ENCODE measurements at regions of chr2 and their contacts with region 1.

Region 1: DNA sequence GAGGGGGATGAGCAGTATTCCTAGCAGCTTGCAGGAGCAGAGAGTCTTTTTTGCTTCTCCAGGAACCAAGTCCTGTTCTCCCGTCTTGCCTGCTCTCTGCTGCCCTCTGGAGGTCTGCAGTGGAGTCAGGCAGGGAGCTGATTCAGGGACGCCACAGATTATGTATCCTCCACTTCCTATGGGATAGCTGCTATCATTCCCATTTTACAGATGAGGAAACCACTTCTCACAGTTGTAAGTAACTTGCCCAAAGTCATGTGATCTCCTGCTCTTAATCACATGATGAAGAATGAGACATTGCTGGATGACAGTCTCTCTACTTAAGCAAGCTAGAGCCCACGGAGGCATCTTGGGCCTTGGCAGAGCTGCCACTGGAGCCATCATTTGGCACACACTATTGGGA is 8.3 kb downstream of the SLC4A5 start:
- DNase-seq: peak; percentile 70 to 82 (median 76)
- ATAC-seq: peak; percentile 59 to 86 (median 74)
- H3K4me3 ChIP-seq: no peak overlapping the region
- H3K27ac ChIP-seq: no peak overlapping the region
- H3K4me1 ChIP-seq: no peaks in the 10 kb centered on the region
- H3K27me3 ChIP-seq: no peaks in the 10 kb centered on the region
- CTCF ChIP-seq: peak; percentile 89 to 98 (median 95)
- POLR2A ChIP-seq: no peak

Region 2: GRCh38 chr2:74250189-74250631 is 84.7 kb before region 1 on chr2:
- intact Hi-C with region 1: loop called in 7 of 10 experiments (anchors 5 to 10 kb)
- DNase-seq: peak in 2 of 5 donors; percentile 31 to 50
- ATAC-seq: peak in 2 of 4 donors; percentile 38 to 51
- H3K4me3 ChIP-seq: no peak overlapping the region
- H3K27ac ChIP-seq: no peak overlapping the region
- H3K4me1 ChIP-seq: peaks cover 0 to 13% (median 2%) of the 10 kb centered on the region in 12 donors
- H3K27me3 ChIP-seq: no peaks in the 10 kb centered on the region
- CTCF ChIP-seq: peak; percentile 62 to 87 (median 74)
- POLR2A ChIP-seq: no peak

Region 3: GRCh38 chr2:74267068-74267467 is 67.9 kb before region 1 on chr2:
- intact Hi-C with region 1: loop called in 3 of 10 experiments (anchors 2 to 5 kb)
- DNase-seq: no peak
- ATAC-seq: peak in 2 of 4 donors; percentile 41 to 47
- H3K4me3 ChIP-seq: no peak overlapping the region
- H3K27ac ChIP-seq: no peak overlapping the region
- H3K4me1 ChIP-seq: peaks cover 0 to 6% (median 0%) of the 10 kb centered on the region in 12 donors
- H3K27me3 ChIP-seq: no peaks in the 10 kb centered on the region
- CTCF ChIP-seq: peak in 9 of 12 donors; percentile 9 to 39 (median 25)
- POLR2A ChIP-seq: no peak

Region 4: DNA sequence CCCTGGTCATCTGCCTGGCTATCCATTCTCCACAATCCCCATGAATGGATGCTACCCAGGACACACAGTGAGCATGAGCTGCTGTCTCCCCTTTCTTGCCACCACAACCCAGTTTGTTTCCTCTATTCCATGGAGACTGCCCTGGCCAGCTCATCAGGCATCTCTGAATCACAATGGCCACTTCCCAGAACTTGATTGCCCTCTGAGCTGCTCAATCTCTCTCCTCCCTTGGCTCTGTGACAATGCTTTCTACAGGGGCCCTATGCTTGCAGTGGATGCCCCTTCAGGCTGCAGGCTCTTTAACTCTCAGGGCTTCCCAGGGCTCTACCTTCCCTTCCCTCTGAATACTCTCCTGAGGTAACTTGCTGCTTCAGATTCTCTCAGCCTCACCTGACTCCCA is 22.7 kb after region 1 on chr2:
- intact Hi-C with region 1: no loop called
- DNase-seq: no peak
- ATAC-seq: peak in 1 of 4 donors; percentile 17
- H3K4me3 ChIP-seq: no peak overlapping the region
- H3K27ac ChIP-seq: no peak overlapping the region
- H3K4me1 ChIP-seq: no peaks in the 10 kb centered on the region
- H3K27me3 ChIP-seq: no peaks in the 10 kb centered on the region
- CTCF ChIP-seq: no peak
- POLR2A ChIP-seq: no peak

Region 5: DNA sequence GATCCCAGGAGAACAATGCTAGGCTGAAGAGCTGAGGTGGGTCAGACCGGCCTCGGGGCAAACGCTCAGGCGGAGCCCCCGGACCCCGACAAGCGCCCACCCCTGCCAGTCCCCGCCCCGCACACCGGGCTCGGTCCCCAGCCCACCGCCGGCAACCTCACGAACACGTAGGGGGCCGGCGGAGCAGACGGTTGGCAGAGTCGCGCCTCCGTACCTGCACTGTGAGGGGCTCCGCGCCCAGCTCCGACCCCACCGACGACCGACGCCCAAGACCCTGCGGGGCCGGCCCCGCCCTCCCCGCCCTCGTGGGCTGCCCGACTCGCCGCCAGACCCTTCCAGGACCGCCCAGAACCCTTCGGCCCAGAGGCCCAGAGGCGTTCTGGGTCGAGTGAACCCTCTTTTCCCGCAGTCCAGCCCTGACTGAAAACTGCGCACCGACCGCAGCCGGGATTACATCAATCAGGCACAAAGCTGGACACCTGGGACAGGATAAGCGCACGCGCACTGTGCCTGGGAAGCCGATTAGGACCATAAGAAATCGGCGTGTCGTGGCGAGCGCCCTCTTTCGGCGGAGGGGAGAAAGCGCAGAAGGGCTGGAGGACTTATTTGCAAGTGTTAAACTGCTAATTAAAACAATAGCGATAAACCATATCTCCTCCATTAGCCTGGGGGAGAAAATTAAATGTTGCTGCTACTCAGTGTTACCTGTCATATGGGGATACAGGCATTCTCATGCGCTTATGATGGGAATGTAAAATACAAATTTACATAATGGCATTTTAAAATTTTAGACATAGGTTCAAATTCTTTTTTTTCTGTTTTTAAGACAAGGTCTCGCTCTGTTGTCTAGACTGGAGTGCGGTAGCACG is 56.9 kb after region 1 on chr2:
- intact Hi-C with region 1: loop called in 6 of 10 experiments (anchors 5 kb)
- DNase-seq: peak; percentile 92 to 98 (median 93)
- ATAC-seq: peak; percentile 72 to 87 (median 86)
- H3K4me3 ChIP-seq: peak overlapping the region; percentile 75 to 99 (median 87)
- H3K27ac ChIP-seq: peak overlapping the region; percentile 88 to 98 (median 93)
- H3K4me1 ChIP-seq: peaks cover 0 to 48% (median 41%) of the 10 kb centered on the region in 12 donors
- H3K27me3 ChIP-seq: no peaks in the 10 kb centered on the region
- CTCF ChIP-seq: peak; percentile 94 to 99 (median 98)
- POLR2A ChIP-seq: peak in 1 of 2 donors; percentile 57

Region 6: GRCh38 chr2:74440378-74441169 is 105.6 kb after region 1 on chr2:
- intact Hi-C with region 1: no loop called
- DNase-seq: peak; percentile 91 to 94 (median 93)
- ATAC-seq: peak; percentile 90 to 95 (median 93)
- H3K4me3 ChIP-seq: peak overlapping the region; percentile 30 to 72 (median 60)
- H3K27ac ChIP-seq: peak overlapping the region; percentile 77 to 95 (median 86)
- H3K4me1 ChIP-seq: peaks cover 0 to 63% (median 37%) of the 10 kb centered on the region in 12 donors
- H3K27me3 ChIP-seq: peaks cover 0 to 39% (median 0%) of the 10 kb centered on the region in 9 donors
- CTCF ChIP-seq: peak in 9 of 12 donors; percentile 11 to 52 (median 29)
- POLR2A ChIP-seq: peak in 1 of 2 donors; percentile 68

Region 7: GRCh38 chr2:74587664-74588277 is 252.8 kb after region 1 on chr2:
- intact Hi-C with region 1: loop called in 1 of 10 experiments (anchors 10 kb)
- DNase-seq: peak; percentile 48 to 62 (median 60)
- ATAC-seq: peak; percentile 71 to 92 (median 92)
- H3K4me3 ChIP-seq: no peak overlapping the region
- H3K27ac ChIP-seq: no peak overlapping the region
- H3K4me1 ChIP-seq: peaks cover 0 to 37% (median 0%) of the 10 kb centered on the region in 12 donors
- H3K27me3 ChIP-seq: peaks cover 0 to 34% (median 8%) of the 10 kb centered on the region in 9 donors
- CTCF ChIP-seq: peak; percentile 48 to 85 (median 74)
- POLR2A ChIP-seq: no peak

Measured in heart left ventricle (tissue), 16 donors.